CD14-positive monocyte (primary cell): ENCODE measurements at regions of chr19 and their contacts with region 1.

Region 1: GRCh38 chr19:14117668-14118164 is at the start of gene PRKACA:
- DNase-seq: peak; percentile 96 to 98 (median 98)
- H3K4me3 ChIP-seq: peak within 1 kb of the TSS; percentile 88 to 99 (median 90)
- H3K4me3 Mint-ChIP-seq: peak within 1 kb of the TSS; percentile 91 to 96
- H3K27ac ChIP-seq: peak within 1 kb of the TSS; percentile 98 to 99
- H3K27ac Mint-ChIP-seq: peak within 1 kb of the TSS; percentile 100
- H3K4me1 ChIP-seq: peaks cover 63 to 69% of the 10 kb centered on the region in 2 donors
- H3K4me1 Mint-ChIP-seq: peaks cover 65% of the 10 kb centered on the region
- H3K27me3 ChIP-seq: no peaks in the 10 kb centered on the region
- H3K27me3 Mint-ChIP-seq: peaks cover 0 to 1% (median 0%) of the 10 kb centered on the region in 3 donors
- CTCF ChIP-seq: no peak
- polyA plus RNA-seq, gene PRKACA: 2.0 to 231 (median 3.8) TPM

Region 2: GRCh38 chr19:14081325-14082093 is 36.2 kb before region 1 on chr19:
- intact Hi-C with region 1: loop called (anchors 2 to 5 kb)
- DNase-seq: peak; percentile 99 to 100 (median 99)
- H3K4me3 ChIP-seq: peak overlapping the region; percentile 79 to 96 (median 82)
- H3K4me3 Mint-ChIP-seq: peak overlapping the region; percentile 88 to 95
- H3K27ac ChIP-seq: peak overlapping the region; percentile 85
- H3K27ac Mint-ChIP-seq: peak overlapping the region; percentile 91 to 98 (median 94)
- H3K4me1 ChIP-seq: peaks cover 54 to 58% of the 10 kb centered on the region in 2 donors
- H3K4me1 Mint-ChIP-seq: peaks cover 39% of the 10 kb centered on the region
- H3K27me3 ChIP-seq: no peaks in the 10 kb centered on the region
- H3K27me3 Mint-ChIP-seq: peaks cover 0 to 5% (median 2%) of the 10 kb centered on the region in 3 donors
- CTCF ChIP-seq: no peak